Heart right ventricle (tissue), 16 donors: ENCODE measurements at regions of chr15 and their contacts with region 1.

Region 1: GRCh38 chr15:83769416-83770004 is 115.6 kb downstream of the ADAMTSL3 start:
- DNase-seq: no peak
- ATAC-seq: no peak
- H3K4me3 ChIP-seq: no peak overlapping the region
- H3K27ac ChIP-seq: no peak overlapping the region
- H3K4me1 ChIP-seq: peaks cover 5 to 49% (median 25%) of the 10 kb centered on the region in 9 donors
- H3K27me3 ChIP-seq: no peaks in the 10 kb centered on the region
- CTCF ChIP-seq: no peak

Region 2: DNA sequence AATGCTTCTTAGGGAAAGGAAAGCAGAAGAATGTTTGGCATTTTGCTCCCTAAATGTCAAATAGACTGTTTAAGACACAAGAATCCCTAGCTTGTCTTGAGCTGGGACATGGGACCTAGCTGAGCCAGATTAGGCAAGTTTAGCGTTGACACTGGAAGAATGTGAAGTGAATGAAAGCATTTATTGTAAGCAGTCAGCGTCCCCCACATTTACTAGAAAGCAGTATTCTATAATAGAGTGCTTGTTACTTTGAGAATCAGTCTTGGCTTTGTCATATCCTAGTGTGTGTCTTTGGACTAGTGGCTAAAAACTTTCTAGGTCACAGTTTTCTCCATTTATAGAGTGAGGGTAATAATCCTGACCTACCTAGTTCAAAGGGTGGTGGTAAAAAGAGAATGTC is 46.0 kb after region 1 on chr15:
- intact Hi-C with region 1: loop called in 1 of 10 experiments (anchors 2 kb)
- DNase-seq: no peak
- ATAC-seq: peak in 2 of 8 donors; percentile 37 to 47
- H3K4me3 ChIP-seq: no peak overlapping the region
- H3K27ac ChIP-seq: peak overlapping the region in 2 of 10 donors; percentile 28 to 41
- H3K4me1 ChIP-seq: peaks cover 0 to 15% (median 8%) of the 10 kb centered on the region in 9 donors
- H3K27me3 ChIP-seq: no peaks in the 10 kb centered on the region
- CTCF ChIP-seq: no peak